Naive thymus-derived CD4-positive, alpha-beta T cell (primary cell): ENCODE measurements at regions of chr12 and their contacts with region 1.

Region 1: DNA sequence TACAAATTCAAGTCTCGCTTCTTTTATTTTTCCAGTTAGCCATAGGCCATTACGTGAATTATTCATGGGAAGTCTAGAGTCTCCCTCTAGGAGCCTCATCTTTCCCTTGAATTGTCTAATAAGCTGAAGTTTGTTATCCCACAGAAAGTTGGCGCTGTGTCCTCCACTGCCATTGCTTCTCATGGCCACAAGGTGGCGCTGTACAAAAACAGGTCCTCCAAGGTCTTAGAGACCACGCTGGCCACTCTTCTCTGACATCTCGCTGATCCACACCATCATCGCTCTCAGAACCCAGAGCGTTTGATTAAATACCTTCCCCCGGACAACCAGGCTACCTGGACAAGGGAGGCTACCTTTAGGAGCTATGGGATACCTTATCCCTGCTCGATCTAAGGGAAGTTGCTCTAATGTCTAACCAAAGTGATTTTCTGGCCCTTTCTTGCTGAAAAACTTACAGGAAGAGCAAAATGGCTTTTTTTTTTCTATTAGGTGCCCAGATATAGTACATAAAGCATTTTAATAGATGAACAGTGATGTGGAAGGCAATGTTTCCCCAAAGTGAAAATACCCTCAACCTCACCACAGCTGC is 110.0 kb downstream of the CCDC60 start:
- DNase-seq: peak in 5 of 9 donors; percentile 2 to 38 (median 8)
- ATAC-seq: peak; percentile 60
- H3K4me3 ChIP-seq: no peak overlapping the region
- H3K4me3 Mint-ChIP-seq: no peak overlapping the region
- H3K27ac ChIP-seq: no peak overlapping the region
- H3K27ac Mint-ChIP-seq: no peak overlapping the region
- H3K4me1 ChIP-seq: no peaks in the 10 kb centered on the region
- H3K4me1 Mint-ChIP-seq: peaks cover 0 to 3% (median 0%) of the 10 kb centered on the region in 7 donors
- H3K27me3 ChIP-seq: peaks cover 0 to 4% of the 10 kb centered on the region in 2 donors
- H3K27me3 Mint-ChIP-seq: peaks cover 0 to 29% (median 26%) of the 10 kb centered on the region in 5 donors

Region 2: DNA sequence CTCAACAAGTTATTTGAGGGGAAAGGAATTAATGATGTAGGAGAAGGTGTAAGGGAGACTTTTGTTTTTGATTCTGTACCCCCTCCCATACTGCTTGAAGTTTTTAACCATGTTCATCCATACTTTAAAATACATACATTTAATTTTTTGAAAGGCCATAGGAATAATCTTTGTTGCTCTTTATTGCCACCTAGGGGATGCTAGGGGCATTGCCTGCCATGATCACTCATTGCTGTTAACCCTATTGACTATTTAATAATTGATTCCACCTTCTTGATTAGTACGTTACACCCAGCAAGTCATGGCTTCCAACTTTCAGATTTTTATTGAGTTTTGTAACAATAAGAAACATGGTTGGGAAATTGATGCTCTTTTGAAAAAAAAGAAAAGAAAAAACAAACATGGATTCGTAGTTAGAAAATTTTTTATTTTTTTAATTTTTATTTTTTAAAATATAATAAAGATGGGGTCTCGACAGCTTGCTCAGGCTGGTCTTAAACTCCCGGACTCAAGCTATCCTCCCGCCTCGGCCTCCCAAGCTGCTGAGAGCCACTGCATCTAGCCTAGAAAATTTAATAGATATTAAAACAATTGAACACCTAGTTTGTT is 214.8 kb after region 1 on chr12:
- CTCF ChIA-PET with region 1: no interaction called
- POLR2A ChIA-PET with region 1: no interaction called
- intact Hi-C with region 1: loop called in 1 of 2 experiments (anchors 2 kb)
- DNase-seq: peak in 6 of 9 donors; percentile 16 to 53 (median 46)
- ATAC-seq: peak; percentile 86
- H3K4me3 ChIP-seq: no peak overlapping the region
- H3K4me3 Mint-ChIP-seq: no peak overlapping the region
- H3K27ac ChIP-seq: no peak overlapping the region
- H3K27ac Mint-ChIP-seq: no peak overlapping the region
- H3K4me1 ChIP-seq: no peaks in the 10 kb centered on the region
- H3K4me1 Mint-ChIP-seq: peaks cover 0 to 10% (median 0%) of the 10 kb centered on the region in 7 donors
- H3K27me3 ChIP-seq: no peaks in the 10 kb centered on the region
- H3K27me3 Mint-ChIP-seq: peaks cover 0 to 13% (median 5%) of the 10 kb centered on the region in 5 donors

Region 3: DNA sequence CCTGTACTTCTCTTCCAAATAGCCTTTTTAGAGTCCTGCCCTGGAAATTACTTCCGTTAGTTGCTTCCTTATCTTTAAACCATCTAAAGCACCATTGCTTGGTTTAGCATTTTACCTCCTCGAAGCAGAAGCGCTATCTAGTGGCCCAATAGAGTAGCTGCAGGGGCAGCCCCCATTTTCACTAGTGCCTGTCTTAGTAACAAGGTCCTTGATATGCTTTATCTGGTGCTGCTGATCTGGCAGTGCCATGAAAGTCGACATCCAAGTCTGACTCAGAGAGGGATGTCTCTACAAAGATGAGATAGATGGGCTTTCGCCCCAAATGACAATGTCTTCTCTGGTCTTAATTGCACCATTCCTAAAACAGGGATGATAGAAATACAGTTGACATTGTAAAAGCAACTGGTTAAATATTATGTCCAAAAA is 457.5 kb after region 1 on chr12:
- CTCF ChIA-PET with region 1: no interaction called
- POLR2A ChIA-PET with region 1: no interaction called
- intact Hi-C with region 1: loop called in 1 of 2 experiments (anchors 2 kb)
- DNase-seq: peak; percentile 19 to 69 (median 61)
- ATAC-seq: peak; percentile 98
- H3K4me3 ChIP-seq: no peak overlapping the region
- H3K4me3 Mint-ChIP-seq: no peak overlapping the region
- H3K27ac ChIP-seq: no peak overlapping the region
- H3K27ac Mint-ChIP-seq: no peak overlapping the region
- H3K4me1 ChIP-seq: no peaks in the 10 kb centered on the region
- H3K4me1 Mint-ChIP-seq: peaks cover 0 to 8% (median 6%) of the 10 kb centered on the region in 7 donors
- H3K27me3 ChIP-seq: no peaks in the 10 kb centered on the region
- H3K27me3 Mint-ChIP-seq: peaks cover 0 to 6% (median 0%) of the 10 kb centered on the region in 5 donors